BJ (cell line): ENCODE measurements at regions of chr11 and their contacts with region 1.

Region 1: DNA sequence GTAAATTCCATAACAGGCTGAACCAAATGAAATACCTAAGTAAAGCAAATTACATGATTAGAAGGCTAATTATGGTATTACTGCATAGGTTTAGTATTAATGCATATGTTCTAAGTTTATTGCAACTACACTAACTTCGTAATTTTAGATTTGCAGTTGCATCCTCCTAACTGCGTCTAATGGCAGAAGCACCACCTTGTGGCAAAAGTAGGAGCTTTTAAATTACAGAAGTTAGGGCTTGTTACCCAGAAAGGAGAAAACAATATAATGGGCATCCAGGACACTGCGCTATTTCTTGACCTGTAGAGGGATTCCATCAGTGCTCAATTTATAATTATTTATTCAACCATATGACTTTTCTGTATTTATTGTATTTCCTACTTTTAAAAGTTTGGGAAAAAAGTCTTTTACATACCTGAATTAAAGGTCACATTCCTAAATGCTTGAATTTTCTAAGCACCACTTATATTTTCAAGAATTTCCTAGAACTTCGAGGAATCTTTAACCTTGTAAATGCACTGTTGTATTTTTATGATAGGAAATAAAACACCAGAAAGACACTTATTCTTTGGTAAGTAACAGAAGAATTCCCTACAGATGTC is 16.3 kb upstream of the GPR83 start:
- DNase-seq: no peak
- H3K4me3 ChIP-seq: no peak overlapping the region
- H3K27me3 ChIP-seq: no peaks in the 10 kb centered on the region
- CTCF ChIP-seq: peak; percentile 65

Region 2: GRCh38 chr11:93921695-93922468 is 495.6 kb before region 1 on chr11:
- CTCF ChIA-PET with region 1: interaction called, 17 read pairs
- POLR2A ChIA-PET with region 1: no interaction called
- DNase-seq: no peak
- H3K4me3 ChIP-seq: no peak overlapping the region
- H3K27me3 ChIP-seq: peaks cover 5% of the 10 kb centered on the region
- CTCF ChIP-seq: peak; percentile 83

Region 3: DNA sequence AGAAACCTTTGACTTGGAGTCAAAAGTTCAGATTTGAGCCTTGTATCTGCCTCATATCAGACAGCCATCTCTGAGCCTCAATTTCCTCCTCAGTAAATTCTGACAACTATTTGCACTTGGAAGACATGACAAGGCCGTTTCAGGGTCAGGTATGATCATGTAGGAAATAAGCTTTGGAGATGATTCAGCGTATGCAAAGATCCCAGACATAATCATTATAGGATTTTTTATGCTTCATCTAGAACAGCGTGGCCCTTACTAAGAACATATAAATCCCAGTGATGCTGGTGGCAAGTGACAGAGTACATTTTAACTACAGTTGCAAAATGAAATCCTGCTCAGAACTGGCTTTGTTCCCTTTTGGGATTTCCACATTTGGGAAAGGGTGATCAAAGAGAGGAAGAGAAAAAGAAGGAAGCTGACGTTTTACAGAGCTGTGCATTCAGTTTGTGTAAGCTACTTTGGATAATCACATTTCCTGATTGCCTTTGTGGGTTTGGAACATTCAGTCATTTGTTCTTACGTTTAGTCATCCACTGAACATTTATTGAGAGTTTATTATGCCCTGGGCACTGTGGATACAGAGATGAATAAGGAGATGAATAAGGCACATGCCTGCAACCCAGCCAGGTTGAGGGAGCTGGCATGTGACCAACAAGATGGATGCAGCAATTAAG is 478.3 kb before region 1 on chr11:
- CTCF ChIA-PET with region 1: no interaction called
- POLR2A ChIA-PET with region 1: no interaction called
- DNase-seq: no peak
- H3K4me3 ChIP-seq: no peak overlapping the region
- H3K27me3 ChIP-seq: peaks cover 3% of the 10 kb centered on the region; the same call in 1 of the 2 replicates
- CTCF ChIP-seq: no peak

Region 4: DNA sequence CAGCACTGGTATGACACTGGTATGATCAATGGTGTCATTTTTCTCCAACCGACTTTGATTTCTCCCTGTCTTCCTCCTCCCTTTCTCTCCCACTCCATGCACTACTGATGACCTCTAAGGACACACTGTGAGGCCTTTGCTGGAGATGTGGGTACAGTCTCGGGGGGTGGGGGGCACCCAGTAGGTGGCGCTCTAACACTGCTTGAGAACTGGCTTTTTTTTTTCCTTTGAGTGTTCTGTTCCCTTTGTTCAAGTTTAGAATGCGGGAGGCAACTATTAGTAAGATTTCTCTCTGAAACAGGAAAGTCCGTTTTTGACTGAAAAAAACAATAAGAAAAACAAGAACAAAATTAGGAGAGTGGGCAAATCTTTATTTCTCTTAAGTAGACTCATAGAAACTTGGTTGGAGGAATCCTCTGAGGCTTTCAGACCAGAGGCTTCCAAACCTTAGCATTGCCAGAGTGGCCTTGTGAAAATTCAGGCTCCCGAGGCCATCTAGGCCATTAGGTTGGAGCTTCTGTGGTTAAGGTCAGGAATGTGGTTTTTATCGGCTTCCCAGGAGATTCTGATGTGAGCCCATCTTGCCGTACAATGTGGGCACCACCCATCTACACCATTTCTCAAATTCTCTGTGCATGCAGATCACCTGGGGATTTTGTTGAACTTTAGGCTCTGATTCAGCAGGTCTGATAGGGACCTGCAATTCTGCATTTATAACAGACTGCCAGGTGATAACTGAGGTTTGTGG is 245.6 kb before region 1 on chr11:
- CTCF ChIA-PET with region 1: interaction called, 33 read pairs
- POLR2A ChIA-PET with region 1: no interaction called
- DNase-seq: no peak
- H3K4me3 ChIP-seq: no peak overlapping the region
- H3K27me3 ChIP-seq: no peaks in the 10 kb centered on the region
- CTCF ChIP-seq: peak; percentile 91

Region 5: DNA sequence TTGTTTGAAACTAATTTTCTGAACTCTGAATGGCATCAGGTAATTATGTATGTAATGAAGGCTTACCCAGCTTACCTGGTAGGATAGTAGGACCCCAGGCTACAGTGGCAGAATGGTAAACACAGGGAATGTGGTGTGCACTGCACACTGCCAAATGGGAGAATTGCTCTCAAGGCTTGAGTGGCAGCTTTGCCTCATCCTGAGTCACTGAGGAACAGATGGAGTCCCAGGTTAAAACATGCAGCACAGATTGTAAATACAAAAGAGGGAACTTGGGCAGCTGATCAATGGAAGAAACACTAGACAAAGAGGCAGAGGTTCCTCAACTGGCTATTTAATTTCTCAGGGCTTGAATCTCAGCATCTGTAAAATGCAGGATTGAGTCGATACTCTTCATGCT is 40.6 kb before region 1 on chr11:
- CTCF ChIA-PET with region 1: no interaction called
- POLR2A ChIA-PET with region 1: no interaction called
- DNase-seq: no peak
- H3K4me3 ChIP-seq: no peak overlapping the region
- H3K27me3 ChIP-seq: no peaks in the 10 kb centered on the region
- CTCF ChIP-seq: no peak

Region 6: DNA sequence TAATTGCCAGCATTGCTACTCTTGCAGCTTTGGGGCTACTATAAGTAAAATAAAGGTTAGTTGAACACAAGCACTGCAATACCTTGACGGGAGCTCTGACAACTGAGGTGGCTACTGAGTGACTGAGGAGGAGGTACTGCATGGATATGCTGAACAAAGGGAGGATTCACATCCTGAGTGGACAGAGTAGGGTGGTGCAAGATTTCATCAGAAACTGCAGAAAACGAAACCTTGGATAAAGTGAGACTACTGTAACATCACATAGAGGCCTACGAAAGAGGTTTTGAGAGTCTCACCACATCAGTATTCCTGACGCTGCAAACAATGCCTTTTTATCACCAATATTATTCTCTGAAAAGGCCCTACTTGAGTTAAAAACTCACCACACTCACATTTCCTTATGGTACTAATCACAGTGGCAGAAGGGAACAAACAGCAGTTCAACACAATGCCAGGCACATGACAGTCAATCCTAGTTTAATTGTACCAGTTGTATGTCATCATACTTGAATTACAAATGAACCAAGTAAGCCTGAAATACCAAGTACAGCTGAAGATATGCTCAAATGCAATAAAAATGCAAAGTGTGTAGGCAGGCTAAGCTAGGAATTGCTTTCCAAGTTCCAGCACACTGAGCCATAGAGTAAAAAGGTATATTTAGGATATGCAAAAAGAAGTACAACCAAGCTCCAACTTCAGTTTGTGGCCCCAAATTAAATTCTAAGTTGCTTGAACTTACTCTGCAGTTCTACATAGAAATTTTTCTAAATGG is 12.2 kb before region 1 on chr11:
- CTCF ChIA-PET with region 1: interaction called, 14 read pairs
- POLR2A ChIA-PET with region 1: no interaction called
- DNase-seq: no peak
- H3K4me3 ChIP-seq: no peak overlapping the region
- H3K27me3 ChIP-seq: peaks cover 8% of the 10 kb centered on the region
- CTCF ChIP-seq: no peak